ENCODE measurements at regions of chr1 and their contacts with region 1.

Region 1: GRCh38 chr1:47866601-47867437 is 130.4 kb downstream of the TRABD2B start:
- DNase-seq: peak; percentile 96
- ATAC-seq: peak; percentile 90
- H3K4me3 ChIP-seq: peak overlapping the region; percentile 14 to 53 (median 15); a peak in 4 of 6 replicates
- H3K27ac ChIP-seq: peak overlapping the region; percentile 97
- H3K4me1 ChIP-seq: peaks cover 83% of the 10 kb centered on the region
- H3K27me3 ChIP-seq: no peaks in the 10 kb centered on the region
- CTCF ChIP-seq: peak; percentile 33
- EP300 ChIP-seq: peak; percentile 31 to 91; a peak in 3 of 4 replicates
- POLR2A ChIP-seq: peak; percentile 53 to 65; a peak in 3 of 4 replicates
- RAD21 ChIP-seq: no peak

Region 2: GRCh38 chr1:47309427-47309826 is 557.4 kb before region 1 on chr1:
- CTCF ChIA-PET with region 1: no interaction called
- POLR2A ChIA-PET with region 1: no interaction called
- in situ Hi-C with region 1: no loop called
- intact Hi-C with region 1: no loop called
- DNase-seq: no peak
- ATAC-seq: no peak
- H3K4me3 ChIP-seq: no peak overlapping the region
- H3K27ac ChIP-seq: no peak overlapping the region
- H3K4me1 ChIP-seq: peaks cover 24% of the 10 kb centered on the region
- H3K27me3 ChIP-seq: no peaks in the 10 kb centered on the region; a peak in 1 of 5 replicates
- CTCF ChIP-seq: no peak
- EP300 ChIP-seq: no peak
- POLR2A ChIP-seq: no peak
- RAD21 ChIP-seq: no peak

Region 3: DNA sequence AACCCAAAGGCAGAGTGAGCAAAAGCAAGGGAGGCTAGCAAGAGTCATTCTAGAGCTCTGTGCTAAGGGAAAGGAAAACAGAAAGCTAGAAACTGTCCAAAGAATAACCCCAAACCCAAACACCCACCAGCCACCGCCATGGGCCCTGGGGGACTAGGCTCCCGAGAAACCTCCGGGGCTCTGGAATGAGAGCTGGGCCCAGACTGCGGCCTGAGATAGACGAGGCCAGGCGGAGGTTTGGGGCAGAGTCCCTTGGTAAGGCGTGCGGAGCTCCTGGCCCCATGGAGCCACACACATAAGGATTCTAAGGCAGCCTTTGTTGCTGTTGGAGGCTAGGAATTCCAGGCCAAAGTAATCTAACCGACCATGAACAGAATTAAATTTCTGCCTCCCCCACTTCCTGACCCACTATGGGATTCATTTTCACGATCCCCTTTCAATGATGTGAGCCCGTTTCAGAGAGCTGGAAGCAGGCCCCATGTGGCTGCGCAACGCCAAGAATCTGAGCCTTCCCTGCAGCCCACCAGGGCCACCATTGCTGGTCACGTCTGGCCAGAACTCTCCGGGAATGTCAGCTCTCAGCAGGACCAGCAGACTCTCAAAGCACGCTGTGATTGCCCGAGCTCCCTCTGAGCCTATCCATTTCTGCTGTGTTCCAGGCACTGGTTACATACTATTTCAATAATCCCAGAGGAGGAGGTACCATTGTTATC is 14.7 kb before region 1 on chr1:
- CTCF ChIA-PET with region 1: no interaction called
- POLR2A ChIA-PET with region 1: interaction called, 17 read pairs
- in situ Hi-C with region 1: no loop called
- intact Hi-C with region 1: no loop called
- DNase-seq: no peak
- ATAC-seq: no peak
- H3K4me3 ChIP-seq: no peak overlapping the region
- H3K27ac ChIP-seq: no peak overlapping the region
- H3K4me1 ChIP-seq: peaks cover 87% of the 10 kb centered on the region
- H3K27me3 ChIP-seq: no peaks in the 10 kb centered on the region
- CTCF ChIP-seq: no peak
- EP300 ChIP-seq: no peak
- POLR2A ChIP-seq: no peak
- RAD21 ChIP-seq: no peak

Region 4: GRCh38 chr1:47883965-47884364 is 17.1 kb after region 1 on chr1:
- CTCF ChIA-PET with region 1: no interaction called
- POLR2A ChIA-PET with region 1: no interaction called
- in situ Hi-C with region 1: no loop called
- intact Hi-C with region 1: no loop called
- DNase-seq: no peak
- ATAC-seq: peak; percentile 68
- H3K4me3 ChIP-seq: no peak overlapping the region
- H3K27ac ChIP-seq: no peak overlapping the region
- H3K4me1 ChIP-seq: peaks cover 42% of the 10 kb centered on the region
- H3K27me3 ChIP-seq: no peaks in the 10 kb centered on the region
- CTCF ChIP-seq: no peak
- EP300 ChIP-seq: no peak
- POLR2A ChIP-seq: no peak
- RAD21 ChIP-seq: no peak